ENCODE measurements at regions of chr5 and their contacts with region 1.

Region 1: DNA sequence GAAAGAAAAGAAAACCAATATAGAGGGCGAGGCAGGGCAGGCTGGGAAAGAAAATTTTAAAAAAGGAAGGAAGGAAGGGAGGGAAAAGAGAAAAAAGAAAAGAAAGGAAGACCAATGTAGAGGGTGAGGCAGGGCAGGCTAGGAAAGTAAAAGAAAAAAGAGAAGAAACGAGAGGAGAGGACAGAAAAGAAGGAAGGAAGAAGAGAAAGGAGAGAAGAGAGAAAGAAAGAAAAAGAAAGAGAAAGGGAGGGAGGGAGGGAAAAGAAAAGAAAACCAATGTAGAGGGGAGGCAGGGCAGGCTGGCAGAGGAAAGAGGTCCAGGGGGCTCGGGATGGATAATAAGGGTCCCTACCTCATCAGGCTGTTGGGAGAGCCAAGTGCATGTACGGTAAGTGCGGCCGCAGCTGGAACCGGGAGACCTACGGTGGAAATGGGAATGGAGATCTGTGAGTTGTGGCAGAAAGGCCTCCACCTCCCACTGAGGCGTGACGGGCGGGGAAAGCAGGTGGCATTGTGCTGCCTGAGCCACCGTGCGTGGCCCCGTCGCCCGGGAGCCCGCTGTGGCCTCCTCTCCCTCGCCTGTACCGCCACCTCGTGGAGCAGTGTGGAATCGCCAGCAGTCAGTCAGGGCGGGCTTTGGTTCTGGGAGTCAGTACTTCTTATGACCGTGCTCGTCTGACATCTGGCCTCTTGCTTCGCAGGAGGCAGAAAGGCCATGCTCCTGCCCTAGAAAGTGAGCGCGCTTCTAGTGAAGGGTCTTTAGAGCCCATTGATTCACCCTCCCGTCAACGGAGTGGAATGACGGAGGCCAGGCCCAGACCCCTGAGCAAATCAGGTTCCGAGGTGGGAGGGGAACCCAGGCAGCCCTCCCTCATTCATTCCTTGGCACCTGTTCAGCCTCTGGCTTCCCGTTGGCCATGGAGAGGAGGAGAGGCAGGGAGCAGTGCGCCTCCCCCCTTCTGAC is 10.4 kb upstream of the NHP2 start:
- DNase-seq: peak; percentile 88 to 97
- ATAC-seq: peak; percentile 97
- H3K4me3 ChIP-seq: no peak overlapping the region
- H3K27ac ChIP-seq: no peak overlapping the region
- H3K4me1 ChIP-seq: no peaks in the 10 kb centered on the region
- H3K27me3 ChIP-seq: no peaks in the 10 kb centered on the region

Region 2: GRCh38 chr5:177599731-177600507 is 564.1 kb before region 1 on chr5 and contains the start of gene B4GALT7:
- intact Hi-C with region 1: loop called in 1 of 2 experiments (anchors 10 kb)
- DNase-seq: peak; percentile 91 to 93
- ATAC-seq: peak; percentile 96
- H3K4me3 ChIP-seq: peak within 1 kb of the TSS; percentile 60 to 90
- H3K27ac ChIP-seq: peak within 1 kb of the TSS in 1 of 2 donors; percentile 92
- H3K4me1 ChIP-seq: no peaks in the 10 kb centered on the region
- H3K27me3 ChIP-seq: no peaks in the 10 kb centered on the region
- total RNA-seq, gene B4GALT7: 18.9 to 22.6 TPM

Region 3: GRCh38 chr5:178075840-178076548 is 88.1 kb before region 1 on chr5:
- intact Hi-C with region 1: loop called (anchors 1 to 5 kb)
- DNase-seq: peak; percentile 69 to 83
- ATAC-seq: no peak
- H3K4me3 ChIP-seq: no peak overlapping the region
- H3K27ac ChIP-seq: no peak overlapping the region
- H3K4me1 ChIP-seq: no peaks in the 10 kb centered on the region
- H3K27me3 ChIP-seq: no peaks in the 10 kb centered on the region

Region 4: DNA sequence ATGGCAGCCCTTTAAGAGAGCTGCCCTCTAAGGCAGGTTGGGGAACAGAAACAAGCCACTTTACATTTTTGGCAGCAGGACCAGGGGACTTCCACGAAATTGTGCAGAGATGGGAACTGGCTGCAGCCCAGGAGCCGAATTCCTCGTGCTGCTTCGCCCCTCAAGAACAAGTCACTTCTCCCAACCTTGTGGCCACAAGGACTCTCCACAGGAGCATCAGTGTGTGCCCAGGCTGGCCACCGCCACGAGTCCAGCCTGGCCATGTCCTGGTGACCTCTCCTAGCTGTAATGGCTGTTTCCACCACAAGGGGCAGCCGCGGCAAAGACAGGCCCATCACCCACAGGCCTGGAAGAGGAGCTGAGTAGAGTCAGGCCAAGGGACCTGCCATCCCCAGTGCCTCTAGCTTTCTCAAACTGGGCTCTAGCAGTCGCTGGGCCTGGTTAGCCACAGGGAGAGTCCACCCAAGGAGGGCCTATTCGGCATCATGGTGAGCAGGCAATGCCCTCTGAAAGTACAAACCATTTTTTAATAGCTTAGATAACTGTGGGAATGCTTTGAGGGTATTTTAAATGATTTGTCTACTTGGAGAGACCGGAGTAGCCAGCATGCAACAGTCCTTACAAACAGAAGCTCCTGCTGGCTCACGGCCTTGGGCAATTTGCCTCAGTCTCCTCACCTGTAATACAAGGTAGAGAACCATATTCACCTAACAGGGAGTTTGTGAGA is 297.1 kb after region 1 on chr5:
- intact Hi-C with region 1: no loop called
- DNase-seq: peak; percentile 90 to 91
- ATAC-seq: peak; percentile 91
- H3K4me3 ChIP-seq: no peak overlapping the region
- H3K27ac ChIP-seq: no peak overlapping the region
- H3K4me1 ChIP-seq: no peaks in the 10 kb centered on the region
- H3K27me3 ChIP-seq: no peaks in the 10 kb centered on the region